Endothelial cell of umbilical vein (primary cell): ENCODE measurements at regions of chr20 and their contacts with region 1.

Region 1: GRCh38 chr20:46767127-46767761 is 57.8 kb downstream of the SLC2A10 start:
- DNase-seq: peak; percentile 25
- H3K4me3 ChIP-seq: no peak overlapping the region
- H3K27ac ChIP-seq: no peak overlapping the region
- H3K4me1 ChIP-seq: no peaks in the 10 kb centered on the region
- H3K27me3 ChIP-seq: peaks cover 0 to 2% of the 10 kb centered on the region in 2 experiments
- CTCF ChIP-seq: peak; percentile 60 to 64
- POLR2A ChIP-seq: no peak

Region 2: GRCh38 chr20:46752728-46753127 is 14.5 kb before region 1 on chr20:
- CTCF ChIA-PET with region 1: interaction called, 35 read pairs
- POLR2A ChIA-PET with region 1: no interaction called
- dilution Hi-C with region 1: no loop called
- intact Hi-C with region 1: no loop called
- DNase-seq: peak; percentile 62
- H3K4me3 ChIP-seq: no peak overlapping the region
- H3K27ac ChIP-seq: no peak overlapping the region
- H3K4me1 ChIP-seq: no peaks in the 10 kb centered on the region
- H3K27me3 ChIP-seq: peaks cover 0 to under 1% of the 10 kb centered on the region in 2 experiments
- CTCF ChIP-seq: peak; percentile 57 to 61
- POLR2A ChIP-seq: no peak